Activated CD4-positive, alpha-beta T cell treated with anti-CD3 and anti-CD28 coated beads, Interleukin-2, amount 10 ng/mL, durations not matched to agents 24 days and 14 days (primary cell): ENCODE measurements at regions of chr5 and their contacts with region 1.

Region 1: GRCh38 chr5:62305715-62306322 is at the start of gene KIF2A:
- DNase-seq: peak; percentile 98
- H3K4me3 Mint-ChIP-seq: peak within 1 kb of the TSS; percentile 100
- H3K27ac Mint-ChIP-seq: peak within 1 kb of the TSS; percentile 100
- H3K4me1 Mint-ChIP-seq: peaks cover 51% of the 10 kb centered on the region
- H3K27me3 Mint-ChIP-seq: no peaks in the 10 kb centered on the region
- total RNA-seq, gene KIF2A: 238 and 244 TPM in 2 replicates

Region 2: DNA sequence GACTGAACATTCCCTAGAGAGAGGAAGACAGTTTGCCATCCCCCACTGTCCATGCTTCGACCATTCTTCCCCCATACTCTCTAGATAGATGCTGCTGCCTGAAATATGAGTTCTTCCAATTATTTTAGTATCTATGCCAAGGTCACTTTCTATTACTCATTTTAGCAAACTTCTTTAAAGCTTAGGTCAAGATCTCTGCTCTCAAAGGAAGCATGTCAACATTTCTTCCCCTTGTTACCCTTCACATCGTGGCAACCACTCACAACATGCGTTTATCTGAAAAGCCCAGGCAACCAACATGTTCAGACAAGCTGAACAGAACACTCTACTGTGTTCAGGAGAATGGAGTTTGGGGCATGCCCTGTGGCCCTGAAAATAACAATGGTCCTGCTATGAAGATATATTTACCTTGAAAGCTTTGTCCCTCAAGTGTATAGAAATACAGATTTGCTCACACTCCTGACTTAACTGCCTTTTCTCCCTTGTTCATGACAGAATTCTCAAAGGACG is 138.2 kb before region 1 on chr5:
- intact Hi-C with region 1: no loop called
- DNase-seq: no peak
- H3K4me3 Mint-ChIP-seq: no peak overlapping the region
- H3K27ac Mint-ChIP-seq: no peak overlapping the region
- H3K4me1 Mint-ChIP-seq: no peaks in the 10 kb centered on the region
- H3K27me3 Mint-ChIP-seq: peaks cover 2% of the 10 kb centered on the region

Region 3: GRCh38 chr5:62256161-62257019 is 49.4 kb before region 1 on chr5:
- intact Hi-C with region 1: loop called (anchors 2 kb)
- DNase-seq: peak; percentile 76
- H3K4me3 Mint-ChIP-seq: peak overlapping the region; percentile 69
- H3K27ac Mint-ChIP-seq: peak overlapping the region; percentile 83
- H3K4me1 Mint-ChIP-seq: peaks cover 54% of the 10 kb centered on the region
- H3K27me3 Mint-ChIP-seq: no peaks in the 10 kb centered on the region

Region 4: GRCh38 chr5:62340392-62340791 is 34.6 kb after region 1 on chr5:
- intact Hi-C with region 1: loop called (anchors 2 kb)
- DNase-seq: no peak
- H3K4me3 Mint-ChIP-seq: no peak overlapping the region
- H3K27ac Mint-ChIP-seq: peak overlapping the region; percentile 30
- H3K4me1 Mint-ChIP-seq: peaks cover 50% of the 10 kb centered on the region
- H3K27me3 Mint-ChIP-seq: no peaks in the 10 kb centered on the region

Region 5: GRCh38 chr5:62354028-62354874 is 48.4 kb after region 1 on chr5:
- intact Hi-C with region 1: loop called (anchors 2 kb)
- DNase-seq: peak; percentile 72
- H3K4me3 Mint-ChIP-seq: no peak overlapping the region
- H3K27ac Mint-ChIP-seq: no peak overlapping the region
- H3K4me1 Mint-ChIP-seq: peaks cover 9% of the 10 kb centered on the region
- H3K27me3 Mint-ChIP-seq: no peaks in the 10 kb centered on the region

Region 6: GRCh38 chr5:62403434-62404250 is 97.8 kb after region 1 on chr5 and contains the start of gene DIMT1:
- intact Hi-C with region 1: loop called (anchors 1 kb)
- DNase-seq: peak; percentile 98
- H3K4me3 Mint-ChIP-seq: peak within 1 kb of the TSS; percentile 90
- H3K27ac Mint-ChIP-seq: peak within 1 kb of the TSS; percentile 91
- H3K4me1 Mint-ChIP-seq: peaks cover 31% of the 10 kb centered on the region
- H3K27me3 Mint-ChIP-seq: no peaks in the 10 kb centered on the region
- total RNA-seq, gene DIMT1: 48.8 and 49.3 TPM in 2 replicates